Caco-2 (cell line): ENCODE measurements at regions of chr6 and their contacts with region 1.

Region 1: GRCh38 chr6:113055061-113055460 is 707.9 kb downstream of the RFPL4B start:
- DNase-seq: no peak
- H3K4me3 ChIP-seq: no peak overlapping the region
- H3K4me3 Mint-ChIP-seq: no peak overlapping the region
- H3K27ac Mint-ChIP-seq: no peak overlapping the region
- H3K4me1 ChIP-seq: 0 out of 2 replicates have a peak, but pooled peaks cover 5% of the 10 kb centered on the region
- H3K4me1 Mint-ChIP-seq: no peaks in the 10 kb centered on the region
- H3K27me3 ChIP-seq: no peaks in the 10 kb centered on the region
- H3K27me3 Mint-ChIP-seq: no peaks in the 10 kb centered on the region
- CTCF ChIP-seq: no peak

Region 2: DNA sequence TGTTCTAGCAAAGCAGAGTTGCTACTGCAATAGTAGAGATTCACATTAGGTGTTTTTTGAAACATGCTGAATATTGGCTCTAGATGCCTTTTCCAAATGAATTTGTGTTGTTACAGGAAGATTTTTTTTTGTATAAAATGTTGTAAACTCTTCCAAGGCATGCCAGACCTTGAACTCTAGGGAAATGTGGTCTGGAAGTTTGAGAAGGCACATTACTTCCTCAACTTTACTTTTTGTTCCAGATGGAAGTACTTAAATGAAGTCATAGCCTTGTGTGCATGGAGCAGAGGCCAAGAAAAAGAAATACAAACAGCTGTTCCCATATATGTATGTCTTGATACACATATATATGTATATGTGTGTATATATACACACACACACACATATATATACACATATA is 216.4 kb after region 1 on chr6:
- CTCF ChIA-PET with region 1: no interaction called
- POLR2A ChIA-PET with region 1: no interaction called
- intact Hi-C with region 1: loop called (anchors 5 kb)
- DNase-seq: no peak
- H3K4me3 ChIP-seq: no peak overlapping the region
- H3K4me3 Mint-ChIP-seq: no peak overlapping the region
- H3K27ac Mint-ChIP-seq: no peak overlapping the region
- H3K4me1 ChIP-seq: no peaks in the 10 kb centered on the region
- H3K4me1 Mint-ChIP-seq: no peaks in the 10 kb centered on the region
- H3K27me3 ChIP-seq: no peaks in the 10 kb centered on the region
- H3K27me3 Mint-ChIP-seq: no peaks in the 10 kb centered on the region
- CTCF ChIP-seq: no peak